Panc1 (cell line): ENCODE measurements at regions of chr3 and their contacts with region 1.

Region 1: GRCh38 chr3:124032648-124033359 is 40.9 kb upstream of the ROPN1 start:
- DNase-seq: no peak
- ATAC-seq: peak; percentile 98
- H3K4me3 ChIP-seq: peak overlapping the region; percentile 55 to 66
- H3K27ac ChIP-seq: no peak overlapping the region
- H3K4me1 ChIP-seq: no peaks in the 10 kb centered on the region
- H3K27me3 ChIP-seq: peaks cover 45% of the 10 kb centered on the region
- CTCF ChIP-seq: peak; percentile 97

Region 2: DNA sequence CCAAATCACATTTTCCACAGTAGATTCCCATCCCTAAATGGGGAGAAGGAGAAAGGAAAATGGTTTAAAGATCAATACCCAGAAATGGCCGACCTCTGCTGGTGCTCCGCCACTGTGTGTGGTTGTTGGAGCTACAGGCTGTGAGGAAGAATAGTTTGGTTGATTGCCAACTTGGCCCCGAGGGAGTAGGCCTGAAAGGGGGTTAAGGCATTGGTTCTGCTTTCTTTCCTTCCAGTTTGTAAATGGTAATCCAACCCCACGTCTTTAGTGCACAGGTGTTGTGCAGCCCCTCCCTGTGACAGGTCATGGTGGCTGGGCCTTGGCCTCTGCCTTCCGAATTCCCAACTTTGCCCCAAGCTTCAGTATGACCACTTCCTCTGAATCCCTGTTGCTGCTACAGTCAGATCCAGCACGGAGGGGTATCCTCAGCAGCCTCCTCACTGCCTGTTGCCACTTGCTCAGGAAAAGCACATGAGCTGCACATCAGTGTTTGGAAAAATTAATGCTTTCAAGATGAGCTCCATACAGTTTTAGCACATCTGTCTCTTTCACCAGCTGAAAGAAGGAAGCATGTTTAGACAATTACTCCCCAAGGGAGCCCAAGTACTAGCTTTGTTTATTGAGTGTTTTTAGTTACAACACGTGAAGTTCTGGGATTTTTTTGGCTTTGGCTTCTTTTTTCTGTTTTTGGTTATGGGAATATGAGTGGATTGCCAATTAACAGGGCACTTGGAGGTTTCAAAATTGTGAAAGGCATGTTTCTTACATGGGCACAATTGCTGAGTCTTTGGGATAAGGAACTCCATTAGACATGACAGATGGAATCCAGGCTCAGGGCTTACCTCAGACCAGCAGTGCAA is 51.4 kb after region 1 on chr3:
- CTCF ChIA-PET with region 1: interaction called, 12 read pairs
- POLR2A ChIA-PET with region 1: no interaction called
- in situ Hi-C with region 1: no loop called
- intact Hi-C with region 1: no loop called
- DNase-seq: no peak
- ATAC-seq: no peak
- H3K4me3 ChIP-seq: no peak overlapping the region
- H3K27ac ChIP-seq: no peak overlapping the region
- H3K4me1 ChIP-seq: no peaks in the 10 kb centered on the region
- H3K27me3 ChIP-seq: peaks cover 31% of the 10 kb centered on the region
- CTCF ChIP-seq: no peak

Region 3: GRCh38 chr3:124207873-124208485 is 175.2 kb after region 1 on chr3:
- CTCF ChIA-PET with region 1: no interaction called
- POLR2A ChIA-PET with region 1: interaction called, 16 read pairs
- in situ Hi-C with region 1: no loop called
- intact Hi-C with region 1: no loop called
- DNase-seq: no peak
- ATAC-seq: no peak
- H3K4me3 ChIP-seq: no peak overlapping the region
- H3K27ac ChIP-seq: no peak overlapping the region
- H3K4me1 ChIP-seq: no peaks in the 10 kb centered on the region
- H3K27me3 ChIP-seq: peaks cover 25% of the 10 kb centered on the region
- CTCF ChIP-seq: no peak

Region 4: GRCh38 chr3:124246949-124247348 is 214.1 kb after region 1 on chr3:
- CTCF ChIA-PET with region 1: no interaction called
- POLR2A ChIA-PET with region 1: no interaction called
- in situ Hi-C with region 1: no loop called
- intact Hi-C with region 1: no loop called
- DNase-seq: peak; percentile 12
- ATAC-seq: peak; percentile 68; the same call in 1 of the 2 replicates
- H3K4me3 ChIP-seq: no peak overlapping the region
- H3K27ac ChIP-seq: no peak overlapping the region
- H3K4me1 ChIP-seq: no peaks in the 10 kb centered on the region
- H3K27me3 ChIP-seq: peaks cover 2% of the 10 kb centered on the region; the same call in 1 of the 2 replicates
- CTCF ChIP-seq: peak; percentile 69

Region 5: GRCh38 chr3:124428372-124429128 is 395.7 kb after region 1 on chr3:
- CTCF ChIA-PET with region 1: interaction called, 16 read pairs
- POLR2A ChIA-PET with region 1: no interaction called
- in situ Hi-C with region 1: no loop called
- intact Hi-C with region 1: no loop called
- DNase-seq: no peak
- ATAC-seq: no peak
- H3K4me3 ChIP-seq: no peak overlapping the region
- H3K27ac ChIP-seq: no peak overlapping the region
- H3K4me1 ChIP-seq: no peaks in the 10 kb centered on the region
- H3K27me3 ChIP-seq: peaks cover 31% of the 10 kb centered on the region
- CTCF ChIP-seq: no peak